BJ (cell line): ENCODE measurements at regions of chr7 and their contacts with region 1.

Region 1: GRCh38 chr7:36670585-36671431 is 53.5 kb downstream of the AOAH start:
- DNase-seq: no peak
- H3K4me3 ChIP-seq: no peak overlapping the region
- H3K27me3 ChIP-seq: 0 out of 2 replicates have a peak, but pooled peaks cover 1% of the 10 kb centered on the region
- CTCF ChIP-seq: peak; percentile 95

Region 2: GRCh38 chr7:36440880-36441279 is 229.9 kb before region 1 on chr7:
- CTCF ChIA-PET with region 1: interaction called, 24 read pairs
- POLR2A ChIA-PET with region 1: no interaction called
- DNase-seq: no peak
- H3K4me3 ChIP-seq: no peak overlapping the region
- H3K27me3 ChIP-seq: no peaks in the 10 kb centered on the region
- CTCF ChIP-seq: peak; percentile 54

Region 3: DNA sequence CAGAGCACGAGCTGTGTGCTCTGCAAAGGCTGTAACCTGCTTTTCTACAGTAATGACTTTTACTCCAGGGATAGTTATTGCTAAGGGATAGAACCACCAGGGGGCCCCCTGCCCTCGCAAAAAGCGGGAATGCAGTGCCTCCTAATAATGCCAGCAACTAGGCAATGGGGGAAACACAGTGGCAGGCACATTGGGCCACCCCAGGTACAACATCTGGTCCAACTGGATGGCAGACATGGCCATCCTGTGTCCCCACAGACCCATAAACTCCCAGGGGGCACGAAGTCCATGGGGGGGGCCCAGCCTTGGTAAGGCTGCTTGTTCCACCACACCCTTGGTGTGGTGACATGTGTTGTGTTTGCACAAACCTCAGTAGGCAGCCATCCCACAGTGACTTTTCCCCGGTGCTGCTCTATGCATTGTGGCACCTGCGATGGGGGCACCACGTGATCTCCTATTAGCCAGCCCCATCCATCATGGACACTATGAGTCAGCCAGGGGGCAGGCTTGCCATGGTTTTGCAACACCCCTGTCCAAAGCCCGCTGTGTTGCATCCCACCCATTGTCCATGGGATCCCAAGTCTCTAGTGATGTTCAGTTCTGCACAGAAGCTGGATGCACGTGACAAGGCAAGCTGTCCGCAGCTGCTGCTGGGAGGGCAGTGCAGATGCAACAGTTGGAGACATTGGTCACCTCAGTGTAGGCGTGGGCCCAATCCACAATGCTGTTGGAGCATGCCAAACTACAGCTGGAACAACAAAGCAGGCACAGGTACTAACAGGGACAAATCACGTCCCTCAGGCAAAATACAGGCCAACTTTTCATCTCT is 197.1 kb before region 1 on chr7:
- CTCF ChIA-PET with region 1: interaction called, 17 read pairs
- POLR2A ChIA-PET with region 1: no interaction called
- DNase-seq: no peak
- H3K4me3 ChIP-seq: no peak overlapping the region
- H3K27me3 ChIP-seq: no peaks in the 10 kb centered on the region
- CTCF ChIP-seq: peak; percentile 50

Region 4: DNA sequence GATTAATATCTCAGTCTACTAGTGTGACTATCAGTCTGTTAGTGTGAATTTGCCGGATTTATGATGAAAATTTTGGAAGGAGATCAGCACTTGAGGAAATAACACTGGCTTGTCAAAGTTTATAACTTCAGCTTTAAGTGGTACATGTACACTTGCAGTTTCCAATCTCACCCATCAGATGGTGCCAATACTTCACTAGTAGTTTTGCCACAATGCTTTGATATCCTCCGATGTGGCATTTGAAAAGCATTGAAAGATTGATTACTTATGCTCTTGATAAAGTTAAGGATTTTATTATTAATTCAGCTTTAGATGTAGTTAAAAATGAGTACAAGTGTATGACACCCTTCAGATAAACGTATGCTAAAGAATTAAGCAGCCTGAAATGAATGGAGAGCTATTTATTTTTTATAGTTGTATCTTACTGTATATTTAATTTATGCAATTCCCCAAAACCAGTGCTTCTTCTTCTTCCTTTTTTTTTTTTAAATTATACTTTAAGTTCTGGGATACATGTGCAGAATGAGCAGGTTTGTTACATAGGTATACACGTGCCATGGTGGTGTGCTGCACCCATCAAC is 183.0 kb before region 1 on chr7:
- CTCF ChIA-PET with region 1: interaction called, 197 read pairs
- POLR2A ChIA-PET with region 1: no interaction called
- DNase-seq: no peak
- H3K4me3 ChIP-seq: no peak overlapping the region
- H3K27me3 ChIP-seq: peaks cover 6% of the 10 kb centered on the region
- CTCF ChIP-seq: peak; percentile 71

Region 5: DNA sequence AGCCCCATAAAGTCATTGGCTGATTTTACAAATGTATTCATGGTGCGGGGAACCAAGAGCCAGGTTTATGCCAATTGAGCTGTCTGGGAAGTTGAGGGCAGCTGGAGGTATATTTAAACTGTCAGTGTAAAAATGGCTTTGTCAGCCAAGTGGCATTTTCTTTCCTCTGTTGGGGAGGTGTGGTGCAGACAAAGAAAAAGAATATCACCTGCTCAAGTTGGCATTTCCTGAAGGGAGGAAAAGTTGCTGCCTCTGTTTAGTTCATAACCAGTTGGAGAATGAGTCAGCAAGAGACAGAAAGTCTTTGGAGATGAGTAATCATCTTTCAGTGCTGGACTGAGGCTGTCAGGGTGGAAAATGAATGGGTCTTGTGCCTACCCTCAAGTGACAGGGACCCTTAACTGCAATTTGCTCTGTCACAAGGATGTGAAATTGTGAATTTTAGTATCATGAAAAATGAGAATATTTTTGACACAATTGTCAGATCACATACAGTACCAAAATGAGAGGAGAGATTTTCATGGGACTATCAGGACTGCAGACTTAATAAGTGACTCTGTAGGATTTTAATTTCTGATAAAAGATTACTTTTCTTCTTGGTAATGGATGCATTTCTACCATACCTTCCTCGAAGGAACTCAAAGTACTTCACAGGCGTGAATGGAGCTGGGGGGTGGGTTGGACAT is 143.8 kb before region 1 on chr7:
- CTCF ChIA-PET with region 1: interaction called, 11 read pairs
- POLR2A ChIA-PET with region 1: no interaction called
- DNase-seq: peak; percentile 20
- H3K4me3 ChIP-seq: no peak overlapping the region
- H3K27me3 ChIP-seq: peaks cover 4% of the 10 kb centered on the region; the same call in 1 of the 2 replicates
- CTCF ChIP-seq: no peak

Region 6: DNA sequence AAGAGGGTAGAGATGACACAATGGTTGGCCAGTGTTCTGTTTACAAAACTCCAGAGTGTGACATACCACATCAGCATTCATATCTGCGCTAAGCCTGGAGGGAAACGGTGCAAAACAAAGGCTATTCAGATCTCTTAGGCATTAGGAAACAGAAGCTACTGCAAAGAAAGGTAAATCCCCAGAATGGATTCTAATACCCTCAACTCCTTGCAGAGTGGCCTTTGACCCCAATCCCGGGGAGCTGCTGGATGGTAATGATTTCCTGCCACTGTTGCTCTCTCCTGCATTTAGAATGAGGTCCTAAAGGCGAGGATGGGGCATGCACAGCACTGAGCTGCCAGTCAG is 11.7 kb before region 1 on chr7:
- CTCF ChIA-PET with region 1: interaction called, 20 read pairs
- POLR2A ChIA-PET with region 1: no interaction called
- DNase-seq: peak; percentile 37
- H3K4me3 ChIP-seq: no peak overlapping the region
- H3K27me3 ChIP-seq: no peaks in the 10 kb centered on the region
- CTCF ChIP-seq: no peak

Region 7: DNA sequence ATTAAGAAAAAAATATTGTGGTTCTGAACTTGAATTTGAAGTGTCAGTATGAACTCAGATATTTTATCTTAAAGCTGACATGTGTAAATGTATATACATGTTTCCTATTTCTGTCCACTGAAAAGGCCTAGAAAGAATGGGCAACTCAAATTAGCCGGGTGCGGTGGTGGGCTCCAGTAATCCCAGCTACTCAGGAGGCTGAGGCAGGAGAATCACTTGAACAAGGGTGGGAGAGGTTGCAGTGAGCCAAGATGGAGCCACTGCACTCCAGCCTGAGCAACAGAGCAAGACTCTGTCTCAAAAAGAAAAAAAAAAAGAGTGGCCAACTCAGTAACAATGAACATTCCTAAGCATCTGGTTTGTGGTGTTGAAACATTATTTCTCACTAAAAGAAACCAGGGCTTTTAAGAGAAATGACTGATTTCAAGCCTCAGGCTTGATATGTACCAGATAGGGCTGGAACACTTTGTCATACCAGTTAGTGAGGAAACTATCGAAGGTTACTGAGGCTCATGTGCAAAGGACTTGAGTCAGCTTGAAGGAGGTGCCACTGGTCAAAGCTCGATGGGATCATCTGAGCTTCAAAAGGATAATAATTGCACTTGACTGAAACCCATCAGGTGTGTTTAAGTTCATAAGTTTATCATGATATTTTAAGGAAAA is 13.0 kb after region 1 on chr7:
- CTCF ChIA-PET with region 1: interaction called, 12 read pairs
- POLR2A ChIA-PET with region 1: no interaction called
- DNase-seq: no peak
- H3K4me3 ChIP-seq: no peak overlapping the region
- H3K27me3 ChIP-seq: no peaks in the 10 kb centered on the region
- CTCF ChIP-seq: no peak

Region 8: DNA sequence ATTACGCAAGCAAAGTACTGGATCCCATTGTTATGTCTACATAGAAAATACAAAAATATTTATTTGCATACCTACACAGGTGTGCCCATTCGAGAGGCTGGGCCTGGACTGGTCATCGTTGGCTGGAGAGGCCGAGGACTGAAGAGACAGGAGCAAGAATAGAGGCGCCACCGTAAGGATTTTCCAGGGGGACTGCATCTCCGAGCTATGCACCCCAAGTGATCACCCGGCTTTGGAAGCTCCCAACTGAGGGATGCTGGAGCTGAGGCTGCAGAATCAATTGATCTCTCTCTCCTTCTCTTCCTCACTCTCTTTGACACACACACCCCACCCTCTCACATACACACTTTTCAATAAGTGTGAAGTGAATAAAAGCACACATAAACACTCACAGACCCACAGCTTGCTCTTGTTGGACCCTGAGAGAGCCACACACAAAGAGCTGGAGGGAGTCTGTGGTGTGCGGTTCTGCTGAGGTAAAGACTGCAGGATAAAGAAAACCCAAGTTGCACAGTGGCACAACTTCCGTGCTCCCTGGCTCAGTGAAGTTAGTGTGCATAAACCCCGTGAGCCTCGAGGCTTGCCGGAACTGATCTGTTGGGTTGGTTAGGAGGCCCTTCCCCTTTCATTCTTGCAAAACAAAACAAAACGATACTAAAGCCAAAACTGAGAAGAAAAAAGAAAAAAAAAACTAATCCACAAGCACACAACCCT is 53.3 kb after region 1 on chr7 and contains the start of gene AOAH:
- CTCF ChIA-PET with region 1: no interaction called
- POLR2A ChIA-PET with region 1: no interaction called
- DNase-seq: no peak
- H3K4me3 ChIP-seq: no peak within 1 kb of the TSS
- H3K27me3 ChIP-seq: no peaks in the 10 kb centered on the region
- CTCF ChIP-seq: no peak
- polyA plus RNA-seq, gene AOAH: not detected in 2 replicates

Region 9: DNA sequence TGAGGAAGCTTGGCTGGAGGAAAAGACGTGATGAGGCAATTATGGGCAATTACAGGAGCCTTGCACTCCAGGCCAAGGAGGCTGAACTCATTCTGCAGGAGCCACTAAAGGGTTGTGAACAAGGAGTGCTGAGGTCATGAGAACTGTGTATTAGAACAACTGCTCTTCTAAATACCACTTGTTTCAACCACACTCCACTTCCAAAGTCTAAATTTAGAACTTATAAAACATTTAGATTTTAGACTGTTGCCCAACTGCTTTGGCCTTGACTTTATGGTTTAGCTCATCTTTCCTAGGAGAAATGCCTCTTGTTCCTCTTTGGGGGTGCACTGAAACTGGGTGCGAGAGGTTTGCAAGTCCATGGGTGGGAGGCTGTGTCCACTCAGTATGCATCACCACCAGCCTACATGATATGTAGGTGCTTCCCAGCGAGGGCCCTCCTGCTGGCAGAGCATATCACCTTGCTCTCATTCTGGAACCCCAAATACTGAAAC is 253.2 kb after region 1 on chr7:
- CTCF ChIA-PET with region 1: no interaction called
- POLR2A ChIA-PET with region 1: no interaction called
- DNase-seq: no peak
- H3K4me3 ChIP-seq: no peak overlapping the region
- H3K27me3 ChIP-seq: no peaks in the 10 kb centered on the region
- CTCF ChIP-seq: no peak